CD8-positive, alpha-beta T cell (primary cell): ENCODE measurements at regions of chr4 and their contacts with region 1.

Region 1: GRCh38 chr4:94256828-94257227 is 49.2 kb downstream of the SMARCAD1 start:
- DNase-seq: peak in 1 of 9 experiments; percentile 9
- ATAC-seq: no peak
- H3K4me3 ChIP-seq: no peak overlapping the region
- H3K4me3 Mint-ChIP-seq: no peak overlapping the region
- H3K27ac ChIP-seq: no peak overlapping the region
- H3K27ac Mint-ChIP-seq: no peak overlapping the region
- H3K4me1 ChIP-seq: no peaks in the 10 kb centered on the region
- H3K4me1 Mint-ChIP-seq: peaks cover 2% of the 10 kb centered on the region
- H3K27me3 ChIP-seq: no peaks in the 10 kb centered on the region
- H3K27me3 Mint-ChIP-seq: no peaks in the 10 kb centered on the region
- CTCF ChIP-seq: no peak

Region 2: GRCh38 chr4:94214703-94215319 is 42.0 kb before region 1 on chr4:
- CTCF ChIA-PET with region 1: no interaction called
- POLR2A ChIA-PET with region 1: no interaction called
- intact Hi-C with region 1: loop called in 1 of 2 experiments (anchors 5 kb)
- DNase-seq: peak in 1 of 9 experiments; percentile 19
- ATAC-seq: no peak
- H3K4me3 ChIP-seq: no peak overlapping the region
- H3K4me3 Mint-ChIP-seq: no peak overlapping the region
- H3K27ac ChIP-seq: no peak overlapping the region
- H3K27ac Mint-ChIP-seq: no peak overlapping the region
- H3K4me1 ChIP-seq: peaks cover under 1% of the 10 kb centered on the region
- H3K4me1 Mint-ChIP-seq: peaks cover 58% of the 10 kb centered on the region
- H3K27me3 ChIP-seq: no peaks in the 10 kb centered on the region
- H3K27me3 Mint-ChIP-seq: no peaks in the 10 kb centered on the region
- CTCF ChIP-seq: no peak

Region 3: DNA sequence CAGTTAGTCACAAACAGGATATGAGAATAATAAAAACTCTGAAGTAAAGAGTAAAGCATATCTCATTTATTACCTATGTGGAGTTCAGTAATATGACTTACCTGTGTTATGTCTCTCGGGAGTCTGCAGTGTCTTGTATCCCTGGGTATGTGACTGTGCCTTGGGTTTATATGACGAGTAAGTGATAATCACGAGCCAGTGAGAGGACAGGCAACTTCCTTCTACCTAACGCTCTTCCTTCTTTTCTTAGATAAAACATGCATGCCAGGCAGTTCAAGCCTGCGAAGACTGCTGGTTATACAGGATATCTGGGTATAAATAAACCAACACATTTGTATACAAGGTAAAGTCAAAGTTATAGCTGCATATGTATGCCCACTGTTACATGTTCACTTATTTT is 85.9 kb after region 1 on chr4 and contains the start of gene HPGDS:
- CTCF ChIA-PET with region 1: no interaction called
- POLR2A ChIA-PET with region 1: no interaction called
- intact Hi-C with region 1: loop called in 1 of 2 experiments (anchors 1 kb)
- DNase-seq: no peak
- ATAC-seq: no peak
- H3K4me3 ChIP-seq: no peak within 1 kb of the TSS
- H3K4me3 Mint-ChIP-seq: no peak within 1 kb of the TSS
- H3K27ac ChIP-seq: no peak within 1 kb of the TSS
- H3K27ac Mint-ChIP-seq: no peak within 1 kb of the TSS
- H3K4me1 ChIP-seq: no peaks in the 10 kb centered on the region
- H3K4me1 Mint-ChIP-seq: peaks cover 18% of the 10 kb centered on the region
- H3K27me3 ChIP-seq: no peaks in the 10 kb centered on the region
- H3K27me3 Mint-ChIP-seq: no peaks in the 10 kb centered on the region
- CTCF ChIP-seq: no peak
- total RNA-seq, gene HPGDS: not detected